ENCODE measurements at regions of chr6 and their contacts with region 1.

Region 1: GRCh38 chr6:15399641-15400470 is 154.0 kb downstream of the JARID2 start:
- H3K4me3 ChIP-seq: peak overlapping the region; percentile 15; the same call in 1 of the 2 replicates
- H3K27ac ChIP-seq: peak overlapping the region; percentile 83
- H3K4me1 ChIP-seq: peaks cover 46% of the 10 kb centered on the region
- CTCF ChIP-seq: no peak

Region 2: DNA sequence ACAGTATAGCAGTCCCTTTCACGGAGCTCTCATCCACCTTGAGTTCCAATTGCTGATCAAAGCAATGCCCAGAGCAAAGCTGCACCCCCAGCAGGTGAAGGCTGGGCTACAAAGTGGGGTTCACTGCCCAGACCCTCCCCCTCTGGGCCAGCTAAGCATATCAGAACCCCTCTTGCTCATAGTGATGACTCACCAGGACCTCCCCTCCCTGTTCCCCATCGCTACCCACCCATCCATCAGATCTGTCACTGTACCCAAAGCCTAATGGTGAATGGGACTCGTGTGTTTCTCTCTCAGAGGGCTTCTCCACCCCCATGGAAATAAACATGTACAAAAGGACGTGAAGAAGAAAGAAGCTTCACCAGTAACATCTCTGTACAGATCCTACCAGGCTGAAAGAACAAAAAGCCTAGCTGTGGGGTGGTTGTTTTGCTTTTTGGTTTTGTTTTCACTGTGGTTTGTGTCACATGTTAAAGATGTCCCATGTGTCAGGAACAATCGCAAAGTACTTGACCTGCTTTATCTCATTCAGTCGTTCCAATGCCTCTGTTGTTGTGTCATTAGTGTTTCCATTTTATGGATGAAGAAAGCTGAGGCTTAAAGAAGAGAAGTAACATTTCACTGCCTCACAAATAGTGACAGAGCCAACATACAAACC is 763.8 kb before region 1 on chr6:
- CTCF ChIA-PET with region 1: no interaction called
- POLR2A ChIA-PET with region 1: interaction called, 11 read pairs
- H3K4me3 ChIP-seq: no peak overlapping the region
- H3K27ac ChIP-seq: no peak overlapping the region
- H3K4me1 ChIP-seq: peaks cover 16% of the 10 kb centered on the region
- CTCF ChIP-seq: no peak

Region 3: GRCh38 chr6:15369838-15370237 is 30.0 kb before region 1 on chr6:
- CTCF ChIA-PET with region 1: no interaction called
- POLR2A ChIA-PET with region 1: no interaction called
- H3K4me3 ChIP-seq: no peak overlapping the region
- H3K27ac ChIP-seq: no peak overlapping the region
- H3K4me1 ChIP-seq: peaks cover 18% of the 10 kb centered on the region
- CTCF ChIP-seq: no peak

Region 4: DNA sequence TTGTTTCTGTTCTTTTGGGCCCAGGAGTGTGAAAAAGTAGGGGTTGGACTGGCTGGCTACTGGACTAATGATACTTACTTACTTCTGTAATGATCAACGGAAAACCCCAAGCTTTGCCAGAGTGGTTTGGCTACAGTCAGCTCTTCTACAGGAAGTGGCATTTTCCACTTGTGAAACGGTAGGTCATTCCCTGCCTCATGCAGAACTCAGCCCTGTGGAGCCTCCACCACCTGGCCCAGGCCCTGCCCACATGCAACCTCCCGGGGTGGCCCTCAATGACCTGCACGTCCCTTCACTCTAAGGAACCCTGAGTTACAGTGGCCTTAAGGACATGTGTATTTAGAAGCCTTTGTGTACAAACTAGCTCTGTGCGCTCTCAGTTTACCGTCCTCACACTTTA is 122.6 kb after region 1 on chr6:
- CTCF ChIA-PET with region 1: no interaction called
- POLR2A ChIA-PET with region 1: no interaction called
- H3K4me3 ChIP-seq: no peak overlapping the region
- H3K27ac ChIP-seq: no peak overlapping the region
- H3K4me1 ChIP-seq: no peaks in the 10 kb centered on the region
- CTCF ChIP-seq: no peak